ENCODE measurements at regions of chr7 and their contacts with region 1.

Region 1: DNA sequence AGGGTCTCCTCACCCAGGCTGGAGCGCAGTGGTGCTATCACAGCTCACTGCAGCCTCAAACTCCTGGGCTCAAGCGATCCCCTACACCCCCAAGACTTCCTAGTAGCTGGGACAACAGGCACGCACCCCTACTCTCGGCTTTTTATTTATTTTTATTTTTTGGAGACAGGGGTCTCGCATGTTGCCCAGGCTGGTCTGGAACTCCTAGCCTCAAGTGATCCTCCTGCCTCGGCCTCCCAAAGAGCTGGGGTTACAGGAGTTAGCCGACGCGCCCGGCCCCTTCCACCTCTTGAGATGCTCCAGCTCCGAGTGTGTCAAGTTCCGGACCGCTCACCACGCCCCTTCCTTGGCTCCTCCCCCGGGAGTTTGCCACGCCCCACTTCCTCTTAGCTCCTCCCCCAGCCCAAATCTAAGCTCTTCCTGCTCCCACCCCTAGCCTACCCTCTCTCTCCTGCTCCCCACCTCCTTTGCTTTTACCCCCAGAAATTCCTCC is 6.3 kb downstream of the NAT16 start:
- DNase-seq: no peak
- H3K4me3 ChIP-seq: peak overlapping the region; percentile 46
- H3K27ac ChIP-seq: peak overlapping the region; percentile 31
- H3K27me3 ChIP-seq: peaks cover 77% of the 10 kb centered on the region
- CTCF ChIP-seq: no peak

Region 2: DNA sequence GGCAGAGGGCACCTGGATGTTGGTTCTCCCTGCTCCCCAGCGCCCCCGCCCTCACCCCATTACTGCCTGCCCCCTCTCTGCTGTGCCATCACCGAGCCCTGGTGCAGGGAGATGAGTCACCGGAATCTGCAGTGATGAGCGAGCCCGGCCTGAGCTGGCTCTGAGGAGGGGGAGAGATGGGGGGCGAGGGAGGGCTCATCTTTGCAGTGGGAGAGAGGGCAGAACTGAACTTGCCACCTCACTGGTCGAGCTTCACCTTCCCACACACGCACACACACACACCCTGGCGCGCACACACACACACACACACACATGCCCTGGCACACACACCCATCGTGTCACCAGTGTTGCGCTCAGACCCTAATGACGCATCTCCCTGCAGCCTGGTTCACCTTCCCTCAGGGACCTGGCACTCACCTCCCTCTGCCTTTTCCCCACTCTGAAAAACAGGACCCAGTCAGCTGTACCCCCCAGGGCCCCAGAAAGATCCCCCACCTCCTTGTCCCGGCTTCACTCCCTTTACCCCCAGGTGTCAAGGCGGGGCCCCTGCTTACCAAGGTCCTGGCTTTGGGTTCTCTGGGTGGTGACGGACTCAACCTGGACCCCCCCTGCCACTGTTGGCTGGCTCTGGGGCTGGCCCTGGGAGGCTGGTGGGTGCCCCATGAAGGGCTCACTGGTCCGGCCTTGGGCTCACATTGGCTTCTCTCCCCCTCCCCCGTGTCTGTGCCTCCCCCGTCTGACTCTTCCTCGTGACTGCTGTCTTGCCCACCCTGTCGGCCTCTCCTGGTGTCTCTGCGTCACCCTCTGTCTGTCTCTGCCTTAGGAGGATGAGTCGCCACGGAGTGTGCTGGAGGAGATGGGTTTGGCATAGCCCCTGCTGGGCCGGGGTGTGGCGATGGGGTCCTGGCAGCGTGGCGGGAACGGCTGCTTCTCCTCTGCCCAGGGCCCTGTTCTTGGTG is 13.8 kb before region 1 on chr7:
- CTCF ChIA-PET with region 1: interaction called, 5 read pairs
- POLR2A ChIA-PET with region 1: interaction called, 11 read pairs
- DNase-seq: no peak
- H3K4me3 ChIP-seq: no peak overlapping the region
- H3K27ac ChIP-seq: no peak overlapping the region
- H3K27me3 ChIP-seq: peaks cover 1% of the 10 kb centered on the region
- CTCF ChIP-seq: no peak